ENCODE measurements at regions of chr15 and their contacts with region 1.

Region 1: DNA sequence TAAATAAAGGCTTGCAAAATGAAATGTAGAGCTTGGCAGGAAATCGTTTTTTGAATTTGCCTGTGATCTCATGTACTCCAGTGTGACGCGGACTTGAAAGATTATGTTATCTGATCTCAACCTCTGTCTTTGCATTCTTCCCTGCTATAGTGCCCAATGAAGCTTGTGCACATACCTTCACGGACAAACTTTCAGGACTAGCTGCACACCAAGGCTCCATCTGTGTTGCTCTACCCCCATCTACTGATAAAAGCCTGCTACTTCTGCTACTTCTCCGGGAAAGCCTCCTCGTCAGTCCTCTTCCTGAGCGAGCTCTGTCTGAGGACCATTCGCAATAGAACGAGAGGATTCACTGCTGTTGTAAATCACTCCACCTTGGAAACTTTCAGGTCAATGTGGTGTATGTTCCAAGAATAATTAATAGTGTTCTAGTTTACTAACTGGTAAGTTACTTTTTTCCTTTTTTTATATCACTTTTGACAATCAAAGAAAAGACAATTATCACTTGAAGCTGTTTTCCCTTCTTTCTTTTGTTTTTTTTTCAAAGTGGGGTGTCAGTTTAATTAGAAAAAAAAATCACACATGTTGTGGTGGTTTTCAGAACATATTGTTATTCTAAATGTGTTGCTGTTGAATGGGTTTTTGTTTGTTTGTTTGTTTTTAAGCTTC is 217.6 kb downstream of the ARRDC4 start:
- DNase-seq: peak; percentile 36
- ATAC-seq: peak; percentile 84
- H3K4me3 ChIP-seq: no peak overlapping the region
- H3K27ac ChIP-seq: no peak overlapping the region
- H3K4me1 ChIP-seq: no peaks in the 10 kb centered on the region
- H3K27me3 ChIP-seq: peaks cover 14% of the 10 kb centered on the region; the same call in 1 of the 2 replicates
- CTCF ChIP-seq: peak; percentile 29 to 62 (median 50); a peak in 5 of 6 replicates
- POLR2A ChIP-seq: no peak
- RAD21 ChIP-seq: peak; percentile 72

Region 2: DNA sequence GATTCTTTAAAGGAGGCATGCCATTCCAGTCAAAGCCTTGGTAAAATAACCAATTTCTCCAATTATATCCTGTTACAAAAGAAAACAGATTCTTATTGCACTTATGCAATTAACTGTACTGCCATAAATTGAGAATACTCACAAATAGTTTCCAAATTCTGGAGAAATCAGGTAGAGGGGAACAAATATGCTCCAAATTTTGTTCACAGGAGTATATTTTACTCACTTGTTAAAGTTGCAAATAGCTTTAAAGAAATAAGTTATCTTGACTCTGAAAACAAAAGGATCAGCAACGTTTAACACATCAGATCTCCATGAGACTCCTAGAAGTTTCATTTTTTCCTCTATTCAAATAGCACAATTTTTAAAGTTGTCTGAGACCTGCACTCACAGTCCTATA is 929.7 kb before region 1 on chr15:
- CTCF ChIA-PET with region 1: interaction called, 8 read pairs
- POLR2A ChIA-PET with region 1: no interaction called
- RAD21 ChIA-PET with region 1: no interaction called
- intact Hi-C with region 1: loop called (anchors 10 kb)
- DNase-seq: no peak
- ATAC-seq: no peak
- H3K4me3 ChIP-seq: no peak overlapping the region
- H3K27ac ChIP-seq: no peak overlapping the region
- H3K4me1 ChIP-seq: no peaks in the 10 kb centered on the region
- H3K27me3 ChIP-seq: no peaks in the 10 kb centered on the region
- CTCF ChIP-seq: no peak
- POLR2A ChIP-seq: no peak
- RAD21 ChIP-seq: no peak

Region 3: GRCh38 chr15:97903971-97904572 is 274.0 kb before region 1 on chr15:
- CTCF ChIA-PET with region 1: interaction called, 24 read pairs
- POLR2A ChIA-PET with region 1: no interaction called
- RAD21 ChIA-PET with region 1: no interaction called
- intact Hi-C with region 1: loop called (anchors 2 kb)
- DNase-seq: peak; percentile 41
- ATAC-seq: peak; percentile 100
- H3K4me3 ChIP-seq: no peak overlapping the region
- H3K27ac ChIP-seq: no peak overlapping the region
- H3K4me1 ChIP-seq: peaks cover 0 to 3% of the 10 kb centered on the region in 2 experiments; a peak in 2 of 4 replicates
- H3K27me3 ChIP-seq: peaks cover 7% of the 10 kb centered on the region
- CTCF ChIP-seq: peak; percentile 70 to 76 (median 75)
- POLR2A ChIP-seq: no peak
- RAD21 ChIP-seq: peak; percentile 80

Region 4: GRCh38 chr15:97995881-97996603 is 182.0 kb before region 1 on chr15:
- CTCF ChIA-PET with region 1: interaction called, 12 read pairs
- POLR2A ChIA-PET with region 1: no interaction called
- RAD21 ChIA-PET with region 1: interaction called in 1 of 2 experiments, 4 read pairs
- intact Hi-C with region 1: no loop called
- DNase-seq: no peak
- ATAC-seq: peak; percentile 70
- H3K4me3 ChIP-seq: no peak overlapping the region
- H3K27ac ChIP-seq: no peak overlapping the region
- H3K4me1 ChIP-seq: peaks cover 0 to 6% of the 10 kb centered on the region in 2 experiments; a peak in 2 of 4 replicates
- H3K27me3 ChIP-seq: no peaks in the 10 kb centered on the region
- CTCF ChIP-seq: peak in 2 of 3 experiments; percentile 51 to 56; a peak in 4 of 6 replicates
- POLR2A ChIP-seq: no peak
- RAD21 ChIP-seq: peak; percentile 27; the same call in 1 of the 2 replicates

Measured in HCT116 (cell line).